ENCODE measurements at regions of chr7 and their contacts with region 1.

Region 1: DNA sequence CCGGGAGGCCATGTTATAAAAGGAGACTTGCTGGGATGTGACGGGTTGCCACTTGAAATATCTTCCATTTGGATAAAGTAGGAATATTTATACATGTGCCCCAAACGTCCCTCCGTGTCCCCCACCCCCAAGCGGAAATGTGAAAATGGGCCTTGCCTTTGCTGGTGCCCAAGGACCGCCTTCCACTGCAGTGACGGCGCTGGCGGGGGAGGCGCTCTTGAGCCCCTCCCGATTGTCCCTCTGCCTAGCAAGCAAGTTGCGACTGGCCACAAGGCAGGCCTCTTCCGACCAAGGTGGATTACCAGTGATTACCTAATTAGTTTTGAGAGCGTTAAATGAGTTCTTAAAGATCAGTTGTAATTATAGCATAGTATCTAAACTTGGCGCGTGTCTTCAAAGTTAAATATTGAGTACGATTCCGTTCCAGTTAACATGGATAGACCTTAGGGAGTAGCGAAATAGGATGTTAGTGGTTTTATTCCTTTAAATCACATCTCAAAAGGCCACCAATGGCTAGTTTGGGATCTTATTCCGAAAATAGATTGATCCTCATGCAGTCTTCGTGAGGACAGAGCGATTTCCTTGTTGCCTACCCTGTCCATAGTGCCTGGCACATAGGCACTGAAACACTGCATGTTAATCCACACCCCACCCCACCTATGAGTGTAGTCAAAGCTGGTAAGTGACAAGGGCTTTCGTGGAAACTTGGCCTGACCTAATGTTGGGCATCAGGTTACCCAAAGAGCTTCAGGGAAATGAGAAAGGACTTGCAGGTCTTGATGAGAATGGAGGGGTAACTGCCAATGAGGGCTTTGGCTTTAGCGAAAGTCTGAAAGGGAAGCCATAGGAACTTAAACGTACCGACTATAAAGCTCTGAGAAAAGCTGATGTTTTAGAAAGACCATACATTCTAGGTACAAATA is 1.1 kb downstream of the PPIA start:
- DNase-seq: peak; percentile 79 to 94 (median 90)
- H3K4me3 ChIP-seq: peak overlapping the region; percentile 61 to 99 (median 92)
- H3K27ac ChIP-seq: peak overlapping the region; percentile 85 to 100 (median 97)
- H3K27me3 ChIP-seq: no peaks in the 10 kb centered on the region
- CTCF ChIP-seq: peak in 55 of 56 donors; percentile 38 to 79 (median 60)

Region 2: DNA sequence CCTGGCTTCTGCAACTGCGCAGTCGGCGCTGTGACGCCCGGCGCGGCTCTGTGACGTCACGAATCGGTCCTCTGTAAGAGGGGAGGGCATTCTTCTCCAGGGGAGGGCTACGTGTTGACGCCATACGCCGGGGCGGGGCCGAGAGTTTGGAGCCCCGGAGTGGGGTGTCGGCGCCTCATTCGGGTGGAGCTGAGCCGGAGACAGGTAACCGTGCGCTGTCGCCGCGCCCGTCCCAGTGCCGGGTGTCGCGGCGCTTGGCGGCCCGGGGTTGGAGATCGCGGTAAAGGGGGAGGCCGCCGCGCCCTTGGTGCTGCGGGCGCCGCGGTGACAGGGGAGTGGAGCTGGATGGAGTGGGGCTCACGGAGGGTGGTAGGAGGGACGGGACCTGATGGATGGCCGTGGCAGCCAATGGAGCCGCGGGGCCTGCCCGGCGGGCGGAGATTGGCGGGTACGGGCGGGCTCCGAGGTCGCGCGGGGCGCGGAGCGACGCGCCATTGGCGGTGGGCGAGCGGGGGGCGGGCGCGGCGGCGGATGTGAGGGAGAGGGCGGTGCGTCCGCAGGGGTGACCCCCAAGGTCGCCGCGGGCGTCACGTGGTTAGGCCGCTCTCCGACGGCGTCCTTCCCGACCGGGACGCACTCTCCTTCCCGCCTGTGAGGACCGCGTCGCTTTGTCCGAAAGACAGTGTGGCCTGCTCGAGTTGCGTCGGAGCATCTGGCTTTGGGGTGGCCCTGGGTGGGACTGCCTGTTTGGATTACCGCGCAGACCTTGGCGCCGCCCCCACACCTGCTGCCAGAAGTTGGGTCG is 190.9 kb before region 1 on chr7 and contains the start of gene OGDH:
- intact Hi-C with region 1: loop called in 1 of 2 experiments (anchors 5 kb)
- DNase-seq: peak; percentile 98 to 100 (median 99)
- H3K4me3 ChIP-seq: peak within 1 kb of the TSS; percentile 60 to 99 (median 88)
- H3K27ac ChIP-seq: peak within 1 kb of the TSS; percentile 88 to 100 (median 98)
- H3K27me3 ChIP-seq: no peaks in the 10 kb centered on the region
- CTCF ChIP-seq: peak in 11 of 56 donors; percentile 1 to 33 (median 12)
- total RNA-seq, gene OGDH: 86.3 to 153 (median 120) TPM

Region 3: GRCh38 chr7:44748045-44748947 is 49.3 kb before region 1 on chr7 and contains the start of gene ZMIZ2:
- intact Hi-C with region 1: loop called (anchors 1 to 5 kb)
- DNase-seq: peak; percentile 82 to 97 (median 92)
- H3K4me3 ChIP-seq: peak within 1 kb of the TSS; percentile 70 to 97 (median 86)
- H3K27ac ChIP-seq: peak within 1 kb of the TSS; percentile 23 to 98 (median 92)
- H3K27me3 ChIP-seq: no peaks in the 10 kb centered on the region
- CTCF ChIP-seq: peak in 4 of 56 donors; percentile 9 to 31 (median 20)
- total RNA-seq, gene ZMIZ2: 106 to 231 (median 160) TPM

Region 4: DNA sequence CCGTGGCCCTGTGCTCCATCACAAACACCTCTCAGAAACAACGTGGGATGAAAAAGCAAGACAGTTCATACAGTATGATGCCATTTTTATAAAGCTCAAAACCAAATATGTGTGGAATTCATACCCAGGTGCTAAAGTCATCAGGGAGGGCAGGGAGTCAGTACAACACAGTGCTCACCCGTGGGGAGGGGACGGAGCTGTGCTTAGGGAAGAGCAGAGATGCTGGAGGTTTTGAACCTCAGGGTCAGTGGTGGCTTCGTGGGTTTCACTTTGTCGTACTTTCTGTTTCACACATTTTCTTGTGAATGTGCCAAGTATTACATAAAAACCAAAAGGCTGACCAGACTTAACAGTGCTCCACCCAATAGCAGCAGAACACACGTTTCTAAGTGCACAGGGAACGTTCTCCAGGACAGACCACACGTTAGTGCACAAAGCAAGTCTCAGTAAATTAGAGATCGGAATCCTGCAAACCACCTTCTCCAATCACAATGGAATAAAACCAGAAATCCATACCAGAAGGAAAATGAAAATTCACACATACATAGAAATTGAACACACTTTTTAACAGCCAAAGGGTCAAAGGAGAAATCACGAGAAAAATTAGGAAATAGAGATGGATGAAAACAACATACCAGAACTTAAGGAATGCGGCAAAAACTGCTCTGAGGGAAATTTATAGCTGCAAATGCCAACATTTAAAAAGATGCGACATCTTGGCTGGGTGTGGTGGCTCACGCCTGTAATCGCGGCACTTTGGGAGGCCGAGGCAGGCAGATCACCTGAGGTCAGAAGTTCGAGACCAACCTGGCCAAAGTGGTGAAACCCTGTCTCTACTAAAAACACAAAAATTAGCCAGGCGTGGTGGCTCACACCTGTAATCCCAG is 27.6 kb before region 1 on chr7:
- intact Hi-C with region 1: loop called (anchors 2 kb)
- DNase-seq: no peak
- H3K4me3 ChIP-seq: peak overlapping the region in 2 of 59 donors; percentile 5 to 6
- H3K27ac ChIP-seq: peak overlapping the region; percentile 78 to 99 (median 95)
- H3K27me3 ChIP-seq: no peaks in the 10 kb centered on the region
- CTCF ChIP-seq: no peak